ENCODE measurements at regions of chr19 and their contacts with region 1.

Region 1: GRCh38 chr19:19554074-19555023 is 16.3 kb downstream of the CILP2 start:
- DNase-seq: no peak
- ATAC-seq: peak; percentile 80
- H3K4me3 ChIP-seq: no peak overlapping the region
- H3K27ac ChIP-seq: no peak overlapping the region
- H3K4me1 ChIP-seq: no peaks in the 10 kb centered on the region
- H3K27me3 ChIP-seq: no peaks in the 10 kb centered on the region
- CTCF ChIP-seq: peak; percentile 56 to 86 (median 75)
- EP300 ChIP-seq: no peak
- POLR2A ChIP-seq: no peak
- RAD21 ChIP-seq: peak; percentile 46

Region 2: GRCh38 chr19:18951665-18952281 is 602.6 kb before region 1 on chr19:
- CTCF ChIA-PET with region 1: no interaction called
- POLR2A ChIA-PET with region 1: no interaction called
- RAD21 ChIA-PET with region 1: no interaction called
- SMC1A ChIA-PET with region 1: no interaction called
- in situ Hi-C with region 1: no loop called
- intact Hi-C with region 1: no loop called
- DNase-seq: no peak
- ATAC-seq: no peak
- H3K4me3 ChIP-seq: no peak overlapping the region
- H3K27ac ChIP-seq: no peak overlapping the region
- H3K4me1 ChIP-seq: peaks cover 12% of the 10 kb centered on the region
- H3K27me3 ChIP-seq: no peaks in the 10 kb centered on the region
- CTCF ChIP-seq: no peak
- EP300 ChIP-seq: no peak
- POLR2A ChIP-seq: no peak
- RAD21 ChIP-seq: no peak

Region 3: DNA sequence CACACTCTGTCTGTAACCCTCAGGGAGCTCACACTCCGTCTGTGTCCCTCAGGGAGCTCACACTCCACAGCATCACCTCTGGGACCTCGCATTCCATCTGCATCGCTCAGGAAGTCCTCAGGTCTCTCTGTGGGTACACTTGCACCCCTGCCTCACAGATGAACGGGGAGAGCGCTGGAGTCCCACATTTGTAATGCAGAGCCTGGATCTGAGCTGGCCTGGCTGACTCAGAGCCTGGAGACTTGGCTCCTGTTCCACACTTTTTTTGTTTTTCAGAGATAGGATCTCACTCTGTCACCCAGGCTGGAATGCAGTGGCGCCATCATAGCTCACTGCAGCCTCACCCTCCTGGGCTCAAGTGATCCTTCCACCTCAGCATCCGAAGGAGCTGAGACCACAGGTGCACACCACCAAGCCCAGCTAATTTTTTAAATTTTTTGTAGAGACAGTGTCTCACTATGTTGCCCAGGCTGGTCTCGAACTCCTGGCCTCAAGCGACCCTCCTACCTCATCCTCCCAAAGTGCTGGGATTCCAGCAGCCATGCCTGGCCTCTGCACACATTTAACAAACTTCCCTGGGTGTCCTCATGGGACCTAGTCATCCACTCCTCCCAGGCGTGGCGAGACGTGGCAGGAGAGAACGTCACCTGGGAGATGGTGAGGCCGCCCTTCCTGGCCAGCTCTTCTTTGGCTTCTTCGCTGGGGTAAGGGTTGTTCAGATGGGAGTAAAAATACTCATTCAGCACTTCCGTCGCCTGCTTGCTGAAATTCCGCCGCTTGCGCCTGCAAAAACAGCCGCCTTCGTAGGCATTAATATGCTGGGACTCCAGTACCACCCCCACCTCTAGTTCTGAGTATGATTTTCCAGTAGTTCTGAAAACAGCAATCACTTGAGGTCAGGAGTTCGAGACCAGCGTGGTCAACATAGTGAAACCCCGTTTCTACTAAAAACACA is 14.7 kb after region 1 on chr19:
- CTCF ChIA-PET with region 1: interaction called, 19 read pairs
- POLR2A ChIA-PET with region 1: no interaction called
- RAD21 ChIA-PET with region 1: interaction called, 3 read pairs
- SMC1A ChIA-PET with region 1: no interaction called
- in situ Hi-C with region 1: no loop called
- intact Hi-C with region 1: no loop called
- DNase-seq: no peak
- ATAC-seq: no peak
- H3K4me3 ChIP-seq: no peak overlapping the region
- H3K27ac ChIP-seq: no peak overlapping the region
- H3K4me1 ChIP-seq: no peaks in the 10 kb centered on the region
- H3K27me3 ChIP-seq: no peaks in the 10 kb centered on the region
- CTCF ChIP-seq: no peak
- EP300 ChIP-seq: no peak
- POLR2A ChIP-seq: no peak
- RAD21 ChIP-seq: no peak

Region 4: DNA sequence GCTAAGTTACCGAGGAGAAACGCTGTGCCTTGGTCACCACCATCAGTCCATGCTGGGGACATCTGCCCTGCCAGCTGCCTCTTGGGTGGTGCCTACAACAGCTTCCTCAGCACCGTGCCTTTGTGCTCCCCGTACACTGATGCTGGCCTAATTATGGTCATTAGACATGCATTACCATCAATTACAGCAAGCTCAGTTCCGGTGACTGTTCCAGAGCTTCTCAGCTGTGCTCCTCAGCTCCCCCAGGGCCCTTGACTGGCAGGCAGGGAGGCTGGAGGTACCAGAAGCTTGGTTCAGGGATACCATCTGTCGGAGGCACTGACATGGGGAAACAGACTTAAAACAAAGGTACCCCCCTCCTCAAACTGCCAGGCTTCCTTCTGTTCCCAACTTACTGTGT is 23.9 kb after region 1 on chr19:
- CTCF ChIA-PET with region 1: interaction called, 10 read pairs
- POLR2A ChIA-PET with region 1: no interaction called
- RAD21 ChIA-PET with region 1: interaction called, 3 read pairs
- SMC1A ChIA-PET with region 1: interaction called, 3 read pairs
- in situ Hi-C with region 1: no loop called
- intact Hi-C with region 1: no loop called
- DNase-seq: no peak
- ATAC-seq: no peak
- H3K4me3 ChIP-seq: no peak overlapping the region
- H3K27ac ChIP-seq: no peak overlapping the region
- H3K4me1 ChIP-seq: no peaks in the 10 kb centered on the region
- H3K27me3 ChIP-seq: no peaks in the 10 kb centered on the region
- CTCF ChIP-seq: no peak
- EP300 ChIP-seq: no peak
- POLR2A ChIP-seq: no peak
- RAD21 ChIP-seq: no peak

Region 5: GRCh38 chr19:19643158-19644053 is 89.1 kb after region 1 on chr19 and contains the start of gene GMIP:
- CTCF ChIA-PET with region 1: interaction called, 9 read pairs
- POLR2A ChIA-PET with region 1: no interaction called
- RAD21 ChIA-PET with region 1: interaction called, 5 read pairs
- SMC1A ChIA-PET with region 1: no interaction called
- in situ Hi-C with region 1: no loop called
- intact Hi-C with region 1: loop called (anchors 5 kb)
- DNase-seq: no peak
- ATAC-seq: peak; percentile 94
- H3K4me3 ChIP-seq: peak within 1 kb of the TSS; percentile 96
- H3K27ac ChIP-seq: peak within 1 kb of the TSS; percentile 99
- H3K4me1 ChIP-seq: peaks cover 4% of the 10 kb centered on the region
- H3K27me3 ChIP-seq: no peaks in the 10 kb centered on the region
- CTCF ChIP-seq: peak; percentile 78 to 90 (median 81)
- EP300 ChIP-seq: no peak
- POLR2A ChIP-seq: peak; percentile 78
- RAD21 ChIP-seq: peak; percentile 90
- polyA plus RNA-seq, gene GMIP: 1.5 to 2.8 TPM